Ovary (tissue), 10 donors: ENCODE measurements at regions of chr1 and their contacts with region 1.

Region 1: DNA sequence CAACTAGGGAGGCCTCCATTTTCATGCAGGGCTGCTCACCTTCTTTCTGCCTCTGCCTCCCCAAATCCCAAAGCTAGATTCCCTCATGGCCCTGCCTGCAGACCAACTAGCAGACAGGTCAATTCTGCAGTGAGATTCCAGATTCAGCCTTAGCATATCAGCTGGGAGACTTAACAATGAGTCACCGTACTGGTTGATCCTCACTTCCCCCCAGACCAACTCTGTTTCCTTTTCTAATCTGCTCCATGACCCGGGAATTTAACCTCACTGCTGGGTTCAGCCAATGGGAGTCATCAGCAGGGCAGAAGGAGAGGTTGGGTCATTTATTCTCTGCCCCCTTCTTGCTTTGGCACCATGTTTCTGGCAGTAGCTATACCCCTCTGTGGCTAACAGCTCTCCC is 140.6 kb upstream of the GRIK3 start:
- DNase-seq: no peak
- H3K4me3 ChIP-seq: no peak overlapping the region
- H3K27ac ChIP-seq: no peak overlapping the region
- H3K4me1 ChIP-seq: no peaks in the 10 kb centered on the region
- H3K27me3 ChIP-seq: no peaks in the 10 kb centered on the region
- CTCF ChIP-seq: no peak
- EP300 ChIP-seq: no peak
- POLR2A ChIP-seq: no peak

Region 2: DNA sequence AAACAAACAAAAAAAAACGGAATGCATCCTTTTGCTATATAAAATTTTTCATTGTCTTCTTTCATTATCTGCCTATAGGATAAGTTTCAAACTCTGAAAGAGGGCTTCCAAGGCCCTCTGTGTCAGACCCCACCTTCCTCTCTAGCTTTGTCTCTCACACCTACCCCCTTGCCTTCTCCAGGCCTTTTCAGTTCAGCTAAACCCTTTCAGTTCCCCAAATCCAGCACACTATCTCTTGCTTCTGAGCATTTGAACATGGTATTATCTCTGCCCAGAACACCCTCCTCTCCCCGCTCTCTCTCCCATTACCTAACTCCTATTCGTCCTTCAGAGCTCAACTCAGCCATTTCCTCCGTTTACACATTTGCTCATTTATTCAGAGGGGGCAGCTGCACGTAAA is 1491.9 kb before region 1 on chr1:
- intact Hi-C with region 1: no loop called
- DNase-seq: no peak
- H3K4me3 ChIP-seq: no peak overlapping the region
- H3K27ac ChIP-seq: no peak overlapping the region
- H3K4me1 ChIP-seq: no peaks in the 10 kb centered on the region
- H3K27me3 ChIP-seq: no peaks in the 10 kb centered on the region
- CTCF ChIP-seq: no peak
- EP300 ChIP-seq: no peak
- POLR2A ChIP-seq: no peak

Region 3: GRCh38 chr1:35851132-35851869 is 1323.6 kb before region 1 on chr1:
- intact Hi-C with region 1: loop called in 1 of 4 experiments (anchors 5 kb)
- DNase-seq: peak in 1 of 5 donors; percentile 12
- H3K4me3 ChIP-seq: no peak overlapping the region
- H3K27ac ChIP-seq: no peak overlapping the region
- H3K4me1 ChIP-seq: peaks cover 6% of the 10 kb centered on the region
- H3K27me3 ChIP-seq: no peaks in the 10 kb centered on the region
- CTCF ChIP-seq: no peak
- EP300 ChIP-seq: no peak
- POLR2A ChIP-seq: no peak

Region 4: GRCh38 chr1:37233606-37234005 is 58.7 kb after region 1 on chr1:
- intact Hi-C with region 1: no loop called
- DNase-seq: no peak
- H3K4me3 ChIP-seq: no peak overlapping the region
- H3K27ac ChIP-seq: no peak overlapping the region
- H3K4me1 ChIP-seq: no peaks in the 10 kb centered on the region
- H3K27me3 ChIP-seq: no peaks in the 10 kb centered on the region
- CTCF ChIP-seq: no peak
- EP300 ChIP-seq: no peak
- POLR2A ChIP-seq: no peak